ENCODE measurements at regions of chr1 and their contacts with region 1.

Region 1: GRCh38 chr1:110053557-110054428 is 16.7 kb downstream of the ALX3 start:
- DNase-seq: peak; percentile 74 to 79
- H3K4me3 ChIP-seq: no peak overlapping the region
- H3K27ac ChIP-seq: no peak overlapping the region
- H3K4me1 ChIP-seq: peaks cover 0 to 20% (median 12%) of the 10 kb centered on the region in 4 donors
- H3K27me3 ChIP-seq: no peaks in the 10 kb centered on the region
- CTCF ChIP-seq: peak in 5 of 7 experiments; percentile 75 to 93 (median 91)
- EP300 ChIP-seq: no peak
- POLR2A ChIP-seq: no peak

Region 2: GRCh38 chr1:110106013-110106941 is 52.5 kb after region 1 on chr1:
- intact Hi-C with region 1: loop called (anchors 5 kb)
- DNase-seq: peak; percentile 73 to 91
- H3K4me3 ChIP-seq: no peak overlapping the region
- H3K27ac ChIP-seq: no peak overlapping the region
- H3K4me1 ChIP-seq: no peaks in the 10 kb centered on the region
- H3K27me3 ChIP-seq: peaks cover 0 to 13% (median 0%) of the 10 kb centered on the region in 3 donors
- CTCF ChIP-seq: peak in 5 of 7 experiments; percentile 68 to 89 (median 86)
- EP300 ChIP-seq: no peak
- POLR2A ChIP-seq: no peak

Region 3: GRCh38 chr1:110161877-110162276 is 108.1 kb after region 1 on chr1:
- intact Hi-C with region 1: no loop called
- DNase-seq: no peak
- H3K4me3 ChIP-seq: no peak overlapping the region
- H3K27ac ChIP-seq: no peak overlapping the region
- H3K4me1 ChIP-seq: no peaks in the 10 kb centered on the region
- H3K27me3 ChIP-seq: peaks cover 0 to 27% (median 0%) of the 10 kb centered on the region in 3 donors
- CTCF ChIP-seq: no peak
- EP300 ChIP-seq: no peak
- POLR2A ChIP-seq: no peak